ENCODE measurements at regions of chr2 and their contacts with region 1.

Region 1: GRCh38 chr2:222561817-222562645 is 93.9 kb downstream of the FARSB start:
- DNase-seq: peak; percentile 63
- H3K4me3 ChIP-seq: no peak overlapping the region
- H3K27ac ChIP-seq: no peak overlapping the region
- H3K4me1 ChIP-seq: no peaks in the 10 kb centered on the region
- H3K27me3 ChIP-seq: no peaks in the 10 kb centered on the region
- CTCF ChIP-seq: peak; percentile 65
- EP300 ChIP-seq: no peak
- RAD21 ChIP-seq: peak; percentile 83

Region 2: GRCh38 chr2:222307143-222307756 is 254.8 kb before region 1 on chr2:
- CTCF ChIA-PET with region 1: interaction called, 18 read pairs
- POLR2A ChIA-PET with region 1: no interaction called
- DNase-seq: no peak
- H3K4me3 ChIP-seq: no peak overlapping the region
- H3K27ac ChIP-seq: no peak overlapping the region
- H3K4me1 ChIP-seq: peaks cover 10 to 11% of the 10 kb centered on the region in 2 experiments; a peak in 3 of 4 replicates
- H3K27me3 ChIP-seq: peaks cover 100% of the 10 kb centered on the region
- CTCF ChIP-seq: no peak
- EP300 ChIP-seq: no peak
- RAD21 ChIP-seq: no peak

Region 3: DNA sequence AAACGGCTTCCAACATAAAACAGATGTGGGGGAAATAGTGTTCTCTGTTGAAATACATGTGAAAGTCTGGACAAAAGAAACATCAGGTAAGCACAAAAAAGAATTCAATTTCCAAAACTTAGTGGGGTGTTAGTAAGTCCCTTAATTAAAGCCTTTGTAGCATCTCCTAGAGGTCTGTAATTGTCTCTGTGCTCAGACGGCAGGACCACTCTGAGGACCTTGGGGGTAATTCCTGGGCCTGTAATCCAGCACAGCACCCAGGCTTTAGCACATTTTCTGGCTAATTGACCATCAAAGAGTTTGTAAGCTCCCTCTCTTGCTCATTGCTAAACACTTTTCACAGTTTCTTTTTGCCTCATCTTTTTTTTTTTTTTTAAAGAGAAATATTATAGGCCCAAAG is 13.6 kb after region 1 on chr2:
- CTCF ChIA-PET with region 1: interaction called, 19 read pairs
- POLR2A ChIA-PET with region 1: no interaction called
- DNase-seq: no peak
- H3K4me3 ChIP-seq: no peak overlapping the region
- H3K27ac ChIP-seq: no peak overlapping the region
- H3K4me1 ChIP-seq: peaks cover 3 to 25% of the 10 kb centered on the region in 2 experiments; a peak in 3 of 4 replicates
- H3K27me3 ChIP-seq: no peaks in the 10 kb centered on the region
- CTCF ChIP-seq: no peak
- EP300 ChIP-seq: no peak
- RAD21 ChIP-seq: no peak

Region 4: DNA sequence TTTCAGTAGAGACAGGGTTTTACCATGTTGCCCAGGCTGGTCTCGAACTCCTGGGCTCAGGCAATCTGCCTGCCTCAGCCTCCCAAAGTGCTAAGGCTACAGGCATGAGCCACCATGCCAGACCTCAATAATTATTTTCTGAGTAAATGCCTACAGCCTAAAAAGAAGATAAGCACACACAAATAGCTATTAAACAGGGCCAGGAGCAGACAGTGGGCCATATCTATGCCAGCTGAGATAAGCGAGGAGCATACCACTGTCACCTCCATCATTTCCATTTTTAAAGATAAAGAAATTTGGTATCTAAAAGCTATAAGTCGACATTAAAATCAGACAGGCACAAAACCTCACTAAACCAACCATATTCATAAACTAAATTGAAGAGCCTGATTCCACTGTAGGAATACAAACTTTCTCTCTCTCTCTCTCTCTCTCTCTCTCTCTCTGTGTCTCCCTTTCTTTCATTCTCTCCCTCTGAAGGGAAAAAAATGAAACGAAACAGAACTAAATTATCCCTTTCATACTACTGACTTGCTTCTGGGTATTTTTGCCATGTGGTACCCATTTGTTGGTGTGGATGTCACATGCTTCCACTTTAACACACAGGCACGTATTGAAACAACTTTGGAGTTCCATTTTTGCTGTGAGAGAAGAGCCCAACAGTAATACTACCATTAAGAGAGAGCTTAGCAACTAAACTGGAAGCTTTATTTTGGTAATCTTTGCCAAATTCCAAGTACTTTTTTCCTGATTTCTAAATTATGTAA is 42.9 kb after region 1 on chr2:
- CTCF ChIA-PET with region 1: interaction called, 11 read pairs
- POLR2A ChIA-PET with region 1: no interaction called
- DNase-seq: peak; percentile 56
- H3K4me3 ChIP-seq: no peak overlapping the region
- H3K27ac ChIP-seq: peak overlapping the region in 1 of 2 experiments; percentile 58; a peak in 1 of 4 replicates
- H3K4me1 ChIP-seq: peaks cover 0 to 22% of the 10 kb centered on the region in 2 experiments; a peak in 2 of 4 replicates
- H3K27me3 ChIP-seq: no peaks in the 10 kb centered on the region
- CTCF ChIP-seq: no peak
- EP300 ChIP-seq: peak in 1 of 2 experiments; percentile 60; a peak in 2 of 4 replicates
- RAD21 ChIP-seq: no peak

Region 5: DNA sequence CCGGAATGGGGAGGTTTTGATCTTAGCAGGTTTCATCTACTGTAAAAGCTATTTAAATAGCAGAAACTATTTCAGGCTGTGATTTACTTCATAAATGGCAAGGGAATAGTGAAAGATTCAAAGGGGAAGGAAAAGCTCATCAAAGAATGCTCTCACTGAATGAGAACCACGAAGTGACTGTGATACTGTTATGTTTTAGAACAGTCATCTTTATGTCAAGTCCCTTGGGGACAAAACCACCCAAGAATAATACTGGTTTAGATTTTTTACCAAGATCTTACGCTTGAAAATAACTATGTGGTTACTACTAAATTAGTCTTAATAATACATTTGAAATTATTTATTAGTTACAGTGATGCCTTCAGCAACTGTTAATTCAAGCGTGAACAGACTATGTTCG is 65.7 kb after region 1 on chr2:
- CTCF ChIA-PET with region 1: no interaction called
- POLR2A ChIA-PET with region 1: no interaction called
- DNase-seq: no peak
- H3K4me3 ChIP-seq: no peak overlapping the region
- H3K27ac ChIP-seq: no peak overlapping the region
- H3K4me1 ChIP-seq: no peaks in the 10 kb centered on the region
- H3K27me3 ChIP-seq: no peaks in the 10 kb centered on the region
- CTCF ChIP-seq: no peak
- EP300 ChIP-seq: no peak
- RAD21 ChIP-seq: no peak